Heart right ventricle (tissue), 16 donors: ENCODE measurements at regions of chr5 and their contacts with region 1.

Region 1: DNA sequence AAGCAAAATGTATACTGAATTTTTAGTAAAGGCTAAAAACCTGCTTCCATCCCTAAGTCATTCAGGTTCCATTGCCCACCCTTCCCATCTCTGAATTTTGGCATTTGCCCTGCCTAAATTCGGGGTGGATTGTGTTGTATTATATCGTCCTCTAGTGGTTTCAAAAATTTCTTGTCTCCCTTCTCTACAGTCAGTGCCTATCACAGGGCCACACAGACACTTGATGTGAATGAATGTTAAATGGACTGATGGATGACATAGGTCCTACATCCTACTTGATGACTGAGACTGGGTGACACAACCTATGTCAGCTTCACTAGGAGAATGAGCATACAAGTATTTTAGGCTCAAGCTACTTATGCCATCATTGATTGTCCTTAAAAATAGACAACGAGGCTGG is 45.6 kb upstream of the SLC30A5 start:
- DNase-seq: no peak
- ATAC-seq: no peak
- H3K4me3 ChIP-seq: no peak overlapping the region
- H3K27ac ChIP-seq: no peak overlapping the region
- H3K4me1 ChIP-seq: peaks cover 0 to 6% (median 0%) of the 10 kb centered on the region in 9 donors
- H3K27me3 ChIP-seq: no peaks in the 10 kb centered on the region
- CTCF ChIP-seq: peak in 4 of 9 donors; percentile 16 to 33 (median 28)

Region 2: DNA sequence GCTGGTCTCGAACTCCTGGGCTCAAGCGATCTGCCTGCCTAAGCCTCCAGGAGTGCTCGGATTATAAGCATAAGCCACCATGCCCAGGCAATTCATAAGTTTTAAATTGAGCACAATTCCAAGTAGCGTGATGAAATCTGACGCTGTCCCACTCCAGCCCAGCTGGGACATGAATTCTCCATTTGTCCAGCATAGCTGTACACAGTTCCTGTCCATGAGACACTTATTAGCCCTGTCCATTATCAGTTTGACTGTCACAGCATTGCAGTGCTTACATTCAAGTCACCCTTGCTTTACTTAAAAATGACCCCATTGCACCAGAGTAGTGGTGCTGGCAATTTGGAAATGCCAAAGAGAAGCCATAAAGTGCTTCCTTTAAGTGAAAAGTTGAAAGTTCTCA is 38.0 kb after region 1 on chr5:
- intact Hi-C with region 1: loop called in 4 of 10 experiments (anchors 5 to 10 kb)
- DNase-seq: no peak
- ATAC-seq: no peak
- H3K4me3 ChIP-seq: no peak overlapping the region
- H3K27ac ChIP-seq: no peak overlapping the region
- H3K4me1 ChIP-seq: peaks cover 0 to 7% (median 0%) of the 10 kb centered on the region in 9 donors
- H3K27me3 ChIP-seq: no peaks in the 10 kb centered on the region
- CTCF ChIP-seq: no peak

Region 3: DNA sequence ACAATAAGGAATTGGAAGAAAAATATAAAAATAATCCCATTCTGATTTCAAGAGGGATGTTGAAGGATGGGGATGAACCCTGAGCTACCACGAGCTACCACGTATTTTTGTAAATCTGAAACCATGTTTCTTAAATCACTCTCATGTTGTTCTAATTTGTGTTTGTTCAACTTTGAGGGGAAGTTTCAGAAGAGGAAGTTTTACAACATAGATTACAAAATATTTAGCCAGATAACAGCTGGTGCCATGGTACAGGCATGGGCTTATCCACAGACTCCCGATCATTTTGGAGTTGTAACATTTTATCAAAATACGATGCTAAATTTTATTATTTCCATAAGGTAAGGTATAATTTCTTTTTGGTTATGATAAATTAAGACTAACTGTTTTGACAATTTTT is 269.2 kb after region 1 on chr5:
- intact Hi-C with region 1: no loop called
- DNase-seq: no peak
- ATAC-seq: no peak
- H3K4me3 ChIP-seq: no peak overlapping the region
- H3K27ac ChIP-seq: peak overlapping the region in 1 of 10 donors; percentile 49
- H3K4me1 ChIP-seq: no peaks in the 10 kb centered on the region
- H3K27me3 ChIP-seq: no peaks in the 10 kb centered on the region
- CTCF ChIP-seq: no peak